Astrocyte of the cerebellum (primary cell): ENCODE measurements at regions of chr1 and their contacts with region 1.

Region 1: DNA sequence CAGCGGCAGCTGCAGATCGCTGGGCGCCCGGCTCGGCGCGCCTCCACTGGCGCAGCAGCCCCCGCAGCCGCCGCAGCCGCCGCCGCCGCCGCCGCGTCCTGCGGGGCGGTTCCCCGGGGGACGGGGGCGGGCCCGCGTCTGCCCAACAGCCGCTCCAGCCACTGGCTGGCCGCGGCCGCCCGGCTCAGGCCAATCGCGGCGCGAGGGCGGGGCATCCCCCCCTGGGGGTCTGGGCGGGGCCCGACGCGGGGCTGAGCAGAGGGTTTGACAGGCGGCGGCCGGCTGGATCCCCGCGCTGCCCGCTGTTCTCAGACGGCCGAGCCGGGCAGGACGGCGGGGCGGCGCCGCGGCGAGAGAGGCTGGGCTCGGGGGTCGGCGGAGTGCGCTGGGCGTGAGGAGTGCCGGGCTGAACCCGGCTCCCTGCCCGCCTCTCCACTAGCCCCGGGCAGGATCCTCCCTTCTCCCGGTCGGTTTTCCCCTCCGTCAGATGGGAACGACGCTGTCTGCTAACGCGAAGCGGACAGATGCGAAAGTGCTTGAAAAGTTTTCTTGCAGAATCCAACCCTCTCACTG is at the start of gene GLIS1:
- DNase-seq: peak; percentile 71
- H3K4me3 ChIP-seq: peak within 1 kb of the TSS; percentile 77
- CTCF ChIP-seq: no peak

Region 2: GRCh38 chr1:53485478-53486394 is 253.5 kb before region 1 on chr1:
- in situ Hi-C with region 1: loop called (anchors 25 kb)
- DNase-seq: peak; percentile 71
- H3K4me3 ChIP-seq: no peak overlapping the region
- CTCF ChIP-seq: peak; percentile 92

Region 3: GRCh38 chr1:53585129-53585528 is 154.1 kb before region 1 on chr1:
- in situ Hi-C with region 1: no loop called
- DNase-seq: no peak
- H3K4me3 ChIP-seq: no peak overlapping the region
- CTCF ChIP-seq: no peak

Region 4: GRCh38 chr1:53681977-53682685 is 57.1 kb before region 1 on chr1:
- in situ Hi-C with region 1: no loop called
- DNase-seq: no peak
- H3K4me3 ChIP-seq: no peak overlapping the region
- CTCF ChIP-seq: peak; percentile 63

Region 5: GRCh38 chr1:53693773-53694717 is 45.1 kb before region 1 on chr1:
- in situ Hi-C with region 1: loop called (anchors 5 kb)
- DNase-seq: no peak
- H3K4me3 ChIP-seq: no peak overlapping the region
- CTCF ChIP-seq: no peak

Region 6: DNA sequence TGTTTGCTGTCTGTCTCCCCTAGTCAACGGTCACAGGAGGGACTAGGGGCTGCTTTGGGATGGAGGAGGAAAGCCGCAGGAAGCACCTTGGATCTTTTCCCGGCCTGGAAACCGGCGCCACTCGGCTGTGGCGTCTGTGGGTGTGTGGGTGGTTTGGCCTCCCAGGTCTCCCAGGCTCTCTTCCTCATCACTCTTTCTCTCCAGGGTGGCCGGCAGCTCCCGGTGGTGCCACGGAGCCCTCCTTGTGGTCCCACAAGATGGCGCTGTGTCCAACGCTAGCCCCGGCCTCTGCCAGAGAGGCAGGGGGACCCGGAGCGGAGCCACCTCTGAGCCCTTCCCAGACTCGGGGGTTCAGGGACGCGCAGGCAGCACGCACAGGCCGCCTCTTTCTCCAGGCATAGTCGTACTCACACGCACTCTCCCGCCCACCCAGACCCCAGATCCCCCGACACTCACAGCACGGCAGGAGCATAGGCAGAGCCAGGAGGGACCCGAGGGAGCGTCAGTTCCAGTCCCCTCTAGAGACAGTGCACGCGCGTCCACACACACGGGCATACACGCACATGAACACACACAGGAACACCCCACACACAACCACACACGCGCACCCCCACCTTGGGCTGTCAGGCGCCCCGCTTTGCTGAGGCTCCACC is 382.4 kb after region 1 on chr1:
- in situ Hi-C with region 1: no loop called
- DNase-seq: peak; percentile 62
- H3K4me3 ChIP-seq: peak overlapping the region; percentile 9
- CTCF ChIP-seq: peak; percentile 75

Region 7: DNA sequence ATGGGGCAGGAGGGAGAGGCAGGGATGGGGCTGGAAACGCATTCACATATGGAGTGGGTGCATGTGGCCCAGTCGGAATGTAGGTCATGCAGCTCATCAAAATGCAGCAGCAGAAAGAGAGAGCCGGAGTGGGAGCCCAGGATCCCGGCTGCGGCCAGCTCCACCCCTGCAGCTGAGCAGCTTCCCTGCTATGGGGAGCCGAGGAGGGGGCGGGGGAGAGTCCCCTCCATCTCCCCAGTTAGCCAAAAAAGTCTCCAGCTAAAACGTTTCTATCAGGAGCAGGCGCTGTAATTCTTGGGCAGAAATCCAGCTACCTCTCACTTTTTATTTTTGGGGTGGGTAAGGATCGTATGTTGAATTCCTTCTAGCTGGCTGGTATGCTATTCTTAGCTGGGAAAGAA is 500.4 kb after region 1 on chr1:
- in situ Hi-C with region 1: no loop called
- DNase-seq: no peak
- H3K4me3 ChIP-seq: no peak overlapping the region
- CTCF ChIP-seq: no peak